Mucosa of descending colon (tissue), 3 donors: ENCODE measurements at regions of chr6 and their contacts with region 1.

Region 1: DNA sequence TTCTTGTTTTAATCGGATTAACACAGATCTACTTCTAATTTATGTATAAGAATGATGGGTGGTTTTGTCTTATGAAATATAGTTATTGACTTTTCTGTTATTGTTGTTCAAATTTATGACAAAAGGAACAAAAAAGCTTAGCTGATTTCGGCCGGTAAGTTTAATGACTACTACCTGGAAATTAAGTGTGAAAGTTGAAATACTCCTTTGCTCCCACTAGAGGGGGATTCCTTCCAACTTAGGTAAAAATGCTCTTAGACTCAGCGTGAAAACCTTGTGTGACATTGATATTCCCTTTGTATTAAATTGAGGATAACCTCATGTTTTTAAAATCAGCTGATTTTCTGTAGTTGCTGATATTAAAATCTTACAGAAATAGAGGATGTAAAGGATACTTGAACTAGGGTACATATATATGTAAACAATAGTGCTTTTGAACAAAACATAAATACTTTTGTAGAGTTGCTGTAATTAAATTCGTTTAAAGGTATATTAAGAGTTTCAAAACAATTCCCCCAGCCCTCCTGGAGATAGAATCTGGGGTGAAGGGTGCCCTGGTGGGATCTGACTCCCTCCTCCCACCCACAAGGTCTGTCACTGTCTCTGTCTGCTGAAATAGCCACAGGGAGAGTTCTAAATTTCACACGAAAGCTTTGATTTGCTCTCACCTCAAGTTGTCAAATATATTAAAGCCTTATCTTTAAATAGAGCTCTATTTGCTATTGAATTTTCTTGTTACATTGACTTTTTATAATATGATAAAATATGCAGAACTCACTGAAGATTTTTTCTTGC is 257.5 kb downstream of the ARID1B start:
- DNase-seq: no peak
- ATAC-seq: peak; percentile 80
- H3K4me3 ChIP-seq: no peak overlapping the region
- H3K4me1 ChIP-seq: peaks cover 17% of the 10 kb centered on the region
- CTCF ChIP-seq: peak; percentile 14

Region 2: GRCh38 chr6:157184202-157185020 is 149.8 kb after region 1 on chr6:
- intact Hi-C with region 1: loop called in 1 of 2 experiments (anchors 10 kb)
- DNase-seq: peak; percentile 82 to 91 (median 88)
- ATAC-seq: peak; percentile 85
- H3K4me3 ChIP-seq: no peak overlapping the region
- H3K4me1 ChIP-seq: peaks cover 17% of the 10 kb centered on the region
- CTCF ChIP-seq: peak; percentile 80